ENCODE measurements at regions of chr3 and their contacts with region 1.

Region 1: DNA sequence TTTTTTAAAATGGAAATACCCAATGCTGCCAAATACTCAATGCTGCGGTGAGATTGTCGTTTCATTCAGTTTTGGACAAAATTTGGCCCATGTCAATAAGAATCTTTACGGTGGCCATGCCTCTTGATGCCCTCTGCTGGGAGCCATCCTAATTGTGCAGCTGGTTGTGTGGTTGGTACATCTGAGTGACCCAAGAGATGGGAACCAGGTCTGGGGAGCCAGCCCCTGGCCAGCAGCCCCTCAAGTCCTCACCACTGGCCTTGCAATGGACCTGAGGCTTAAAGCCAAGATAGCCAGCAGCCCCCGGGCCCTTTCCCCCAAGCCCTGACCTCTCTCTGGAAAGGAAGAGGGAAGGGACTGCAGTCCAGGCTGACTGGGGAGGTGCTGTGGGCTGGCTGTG is 36.4 kb upstream of the ESYT3 start:
- DNase-seq: no peak
- ATAC-seq: no peak

Region 2: GRCh38 chr3:138338811-138339210 is 59.2 kb before region 1 on chr3:
- intact Hi-C with region 1: loop called (anchors 5 kb)
- DNase-seq: no peak
- ATAC-seq: peak; percentile 58

Region 3: GRCh38 chr3:138347960-138348753 is 49.8 kb before region 1 on chr3 and contains the start of gene MRAS:
- intact Hi-C with region 1: loop called (anchors 1 kb)
- DNase-seq: peak; percentile 88
- ATAC-seq: peak; percentile 85
- total RNA-seq, gene MRAS: 396 TPM

Region 4: GRCh38 chr3:138361561-138361971 is 36.4 kb before region 1 on chr3:
- intact Hi-C with region 1: loop called (anchors 5 kb)
- DNase-seq: no peak
- ATAC-seq: no peak

Region 5: DNA sequence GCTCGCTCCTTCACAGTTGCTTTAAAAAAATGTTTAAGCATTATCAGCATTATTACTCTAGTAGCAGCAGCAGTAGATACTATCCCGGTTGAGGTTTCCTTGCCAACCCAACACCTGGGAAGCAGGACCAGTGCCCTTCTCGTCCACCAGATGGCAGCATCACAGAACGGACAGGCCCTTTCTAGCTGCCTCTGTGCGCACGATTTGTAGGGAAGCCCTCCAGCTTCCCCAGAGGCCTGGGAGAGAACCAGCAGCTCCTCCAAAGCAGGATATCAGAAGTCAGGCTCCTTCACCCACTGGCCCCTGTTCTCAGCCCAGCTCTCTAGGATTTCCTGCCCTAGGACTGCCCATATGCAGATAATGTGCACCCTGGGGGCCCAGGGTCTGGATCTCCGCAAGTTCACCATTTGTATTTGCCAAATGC is 19.6 kb after region 1 on chr3:
- intact Hi-C with region 1: no loop called
- DNase-seq: peak; percentile 84
- ATAC-seq: peak; percentile 87

Region 6: DNA sequence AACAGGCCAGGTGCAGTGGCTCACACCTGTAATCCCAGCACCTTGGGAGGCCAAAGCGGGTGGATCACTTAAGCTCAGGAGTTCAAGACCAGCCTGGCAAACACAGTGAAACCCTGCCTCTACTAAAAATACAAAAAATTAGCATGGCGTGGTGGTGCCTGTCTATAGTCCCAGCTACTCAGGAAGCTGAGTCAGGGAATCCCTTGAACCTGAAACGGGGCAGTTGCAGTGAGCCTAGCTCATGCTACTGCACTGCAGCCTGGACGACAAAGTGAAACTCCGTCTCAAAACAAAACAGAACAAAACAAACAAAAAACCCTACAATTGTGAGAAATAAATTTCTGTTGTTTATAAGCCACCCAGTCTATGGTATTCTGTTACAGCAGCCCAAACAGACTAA is 342.1 kb after region 1 on chr3:
- intact Hi-C with region 1: no loop called
- DNase-seq: no peak
- ATAC-seq: no peak